HEK293T (cell line): ENCODE measurements at regions of chr1 and their contacts with region 1.

Region 1: DNA sequence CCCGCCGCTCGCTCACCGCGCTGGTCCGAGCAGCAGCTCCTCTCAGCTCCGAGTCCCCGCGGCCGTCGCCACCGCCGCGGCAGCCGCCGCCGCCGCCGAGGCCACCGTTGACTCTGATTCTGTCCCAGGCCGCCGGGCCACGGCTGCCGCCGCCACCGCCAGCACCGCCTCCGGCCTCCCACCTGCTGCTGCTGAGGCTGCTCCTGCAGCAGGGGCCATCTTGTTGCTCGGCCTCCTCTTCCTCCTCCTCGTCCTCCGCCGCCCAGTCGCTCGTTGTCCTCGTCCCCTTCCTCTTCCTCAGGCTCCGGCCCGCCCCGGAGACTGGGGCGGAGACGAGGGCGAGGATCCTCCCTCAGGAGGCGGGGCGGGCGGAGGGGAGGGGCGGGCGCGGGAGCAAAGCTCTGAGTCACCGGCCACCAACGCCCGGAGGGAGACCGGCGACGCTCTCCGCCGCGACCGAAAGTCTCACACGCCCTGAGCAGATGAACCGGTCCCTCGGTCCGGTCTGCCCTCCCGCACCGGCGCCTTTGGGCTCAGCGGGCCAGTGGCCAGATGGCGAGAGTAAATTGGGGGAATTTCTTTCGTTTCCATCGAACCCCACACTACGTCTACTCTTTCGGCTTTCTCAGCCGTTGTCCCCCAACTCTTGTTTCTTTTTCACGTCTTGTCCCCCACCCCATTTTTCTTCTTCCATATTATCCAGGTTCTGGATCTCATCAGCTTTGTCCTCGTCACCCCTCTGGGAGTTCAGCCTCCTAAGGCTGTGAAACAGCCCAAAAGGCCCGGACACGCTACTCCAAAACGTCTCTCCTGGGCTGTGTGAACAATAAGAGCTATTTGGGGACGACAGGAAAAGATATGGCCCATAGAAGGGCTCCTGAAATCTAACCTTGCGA is at the start of gene RC3H1:
- DNase-seq: peak; percentile 89

Region 2: DNA sequence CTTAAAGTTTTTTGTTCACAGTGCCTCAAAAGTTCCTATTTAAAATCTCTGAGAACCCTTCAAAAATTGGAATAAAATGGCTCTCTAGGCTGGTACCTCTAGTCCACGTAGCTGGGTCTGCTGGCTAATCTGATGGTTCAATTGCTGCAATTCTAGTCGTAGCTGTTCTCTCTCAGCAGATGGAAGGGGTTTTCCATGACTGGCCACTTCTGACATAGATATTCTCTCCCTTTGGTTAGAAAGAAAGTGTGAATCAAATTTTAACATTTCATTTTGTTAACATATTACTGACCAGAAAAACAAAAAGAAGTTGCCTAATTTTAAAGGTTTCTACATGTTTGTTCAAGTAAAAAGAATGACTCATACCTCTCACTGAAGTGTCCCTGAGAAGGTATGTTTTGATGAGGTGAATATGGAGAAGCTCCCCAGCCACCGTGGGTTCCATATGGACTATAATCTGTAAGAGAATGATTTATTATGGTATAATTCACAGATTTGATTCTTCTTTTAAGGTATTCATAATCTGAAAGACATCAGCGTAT is 75.9 kb before region 1 on chr1:
- CTCF ChIA-PET with region 1: no interaction called
- POLR2A ChIA-PET with region 1: no interaction called
- DNase-seq: no peak

Region 3: DNA sequence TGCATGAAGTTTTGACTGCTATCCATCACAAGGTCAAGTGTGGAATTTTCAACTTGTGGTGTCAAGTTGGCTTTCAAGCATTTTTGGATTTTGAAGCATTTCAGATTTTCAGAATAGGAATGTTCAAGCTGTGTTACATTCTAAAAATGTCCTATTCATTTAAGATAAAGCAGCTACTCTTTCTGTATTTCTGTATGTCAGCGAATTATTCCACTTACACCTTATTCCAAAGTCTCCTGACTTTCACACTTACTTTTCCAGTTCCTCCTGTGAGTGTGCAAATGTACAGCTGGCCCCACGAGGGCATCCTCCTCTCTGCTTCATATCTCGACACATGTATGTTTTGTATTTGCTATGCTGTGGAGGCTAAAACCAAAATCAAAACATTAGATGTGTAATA is 52.1 kb before region 1 on chr1:
- CTCF ChIA-PET with region 1: no interaction called
- POLR2A ChIA-PET with region 1: no interaction called
- DNase-seq: no peak

Region 4: DNA sequence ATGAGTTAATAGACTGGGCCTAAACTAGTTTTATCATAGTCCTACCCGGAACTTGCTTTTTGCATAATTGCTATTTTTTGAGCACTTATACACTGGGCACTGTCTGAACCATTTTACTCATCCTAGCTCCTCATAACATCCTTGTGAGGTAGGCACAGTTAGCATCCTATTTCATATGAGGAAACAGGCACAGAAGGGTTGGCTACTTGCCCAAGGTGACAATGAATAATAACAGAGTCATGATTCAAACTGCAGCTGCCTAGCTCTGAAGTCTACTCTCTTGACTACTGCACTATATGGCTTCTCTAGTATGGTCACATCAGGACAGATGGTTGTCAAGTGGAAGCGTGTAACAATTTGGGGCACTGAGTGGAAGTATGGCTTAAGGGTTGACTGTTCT is 18.1 kb after region 1 on chr1:
- CTCF ChIA-PET with region 1: no interaction called
- POLR2A ChIA-PET with region 1: interaction called, 12 read pairs
- DNase-seq: no peak

Region 5: GRCh38 chr1:174105086-174105485 is 82.8 kb after region 1 on chr1:
- CTCF ChIA-PET with region 1: no interaction called
- POLR2A ChIA-PET with region 1: no interaction called
- DNase-seq: no peak